BJ (cell line): ENCODE measurements at regions of chr21 and their contacts with region 1.

Region 1: GRCh38 chr21:44892536-44893277 is 19.2 kb upstream of the PTTG1IP start:
- DNase-seq: no peak
- H3K4me3 ChIP-seq: no peak overlapping the region
- H3K27me3 ChIP-seq: peaks cover 30% of the 10 kb centered on the region
- CTCF ChIP-seq: peak; percentile 93

Region 2: GRCh38 chr21:44880762-44881585 is 11.7 kb before region 1 on chr21:
- CTCF ChIA-PET with region 1: interaction called, 27 read pairs
- POLR2A ChIA-PET with region 1: interaction called, 4 read pairs
- DNase-seq: peak; percentile 52
- H3K4me3 ChIP-seq: no peak overlapping the region
- H3K27me3 ChIP-seq: peaks cover 1% of the 10 kb centered on the region; the same call in 1 of the 2 replicates
- CTCF ChIP-seq: no peak

Region 3: DNA sequence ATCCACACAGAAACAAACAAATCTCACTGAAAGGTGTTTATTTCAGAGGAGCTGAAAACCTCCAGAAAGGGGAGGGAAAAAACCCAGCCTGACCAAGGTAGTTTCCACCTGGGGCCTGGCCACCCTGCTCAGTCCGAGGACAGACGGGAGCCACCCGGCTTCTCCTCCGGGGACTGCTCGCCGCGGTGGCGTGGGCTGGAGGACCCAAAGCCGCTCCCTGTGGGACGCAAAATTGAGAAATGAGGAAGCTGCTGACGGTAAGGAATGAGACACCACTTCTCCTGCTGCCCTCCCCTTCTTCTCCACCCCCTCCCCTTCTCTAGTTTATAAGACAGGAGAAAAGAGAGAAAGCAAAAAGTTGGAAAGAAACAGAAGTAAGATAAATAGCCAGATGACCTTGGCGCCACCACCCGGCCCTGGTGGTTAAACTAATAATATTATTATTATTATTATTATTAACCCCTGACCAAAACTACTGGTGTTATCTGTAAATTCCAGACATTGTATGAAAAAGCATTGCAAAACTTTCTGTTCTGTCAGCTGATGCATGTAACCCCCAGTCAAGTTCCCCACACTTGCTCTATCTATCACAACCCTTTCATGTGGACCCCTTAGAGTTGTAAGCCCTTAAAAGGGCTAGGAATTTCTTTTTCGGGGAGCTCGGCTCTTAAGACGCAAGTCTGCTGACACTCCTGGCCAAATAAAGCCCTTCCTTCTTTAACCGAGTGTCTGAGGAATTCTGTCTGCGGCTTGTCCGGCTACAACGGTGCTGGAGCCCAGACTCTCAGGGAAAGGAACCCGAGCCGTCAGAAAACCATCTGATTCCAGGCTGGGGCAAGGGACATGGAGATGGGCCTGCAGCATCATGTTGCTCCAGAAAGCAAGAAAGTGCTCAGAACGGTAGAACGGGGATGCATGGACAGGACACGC is 15.5 kb after region 1 on chr21:
- CTCF ChIA-PET with region 1: interaction called, 18 read pairs
- POLR2A ChIA-PET with region 1: no interaction called
- DNase-seq: no peak
- H3K4me3 ChIP-seq: no peak overlapping the region
- H3K27me3 ChIP-seq: peaks cover 35% of the 10 kb centered on the region
- CTCF ChIP-seq: no peak

Region 4: GRCh38 chr21:44914176-44914874 is 21.6 kb after region 1 on chr21:
- CTCF ChIA-PET with region 1: interaction called, 11 read pairs
- POLR2A ChIA-PET with region 1: no interaction called
- DNase-seq: no peak
- H3K4me3 ChIP-seq: no peak overlapping the region
- H3K27me3 ChIP-seq: peaks cover 19% of the 10 kb centered on the region
- CTCF ChIP-seq: no peak

Region 5: GRCh38 chr21:44927587-44928461 is 35.1 kb after region 1 on chr21:
- CTCF ChIA-PET with region 1: interaction called, 25 read pairs
- POLR2A ChIA-PET with region 1: no interaction called
- DNase-seq: no peak
- H3K4me3 ChIP-seq: no peak overlapping the region
- H3K27me3 ChIP-seq: peaks cover 24% of the 10 kb centered on the region
- CTCF ChIP-seq: peak; percentile 24; the same call in 1 of the 2 replicates